Right lobe of liver (tissue), 6 donors: ENCODE measurements at regions of chr6 and their contacts with region 1.

Region 1: DNA sequence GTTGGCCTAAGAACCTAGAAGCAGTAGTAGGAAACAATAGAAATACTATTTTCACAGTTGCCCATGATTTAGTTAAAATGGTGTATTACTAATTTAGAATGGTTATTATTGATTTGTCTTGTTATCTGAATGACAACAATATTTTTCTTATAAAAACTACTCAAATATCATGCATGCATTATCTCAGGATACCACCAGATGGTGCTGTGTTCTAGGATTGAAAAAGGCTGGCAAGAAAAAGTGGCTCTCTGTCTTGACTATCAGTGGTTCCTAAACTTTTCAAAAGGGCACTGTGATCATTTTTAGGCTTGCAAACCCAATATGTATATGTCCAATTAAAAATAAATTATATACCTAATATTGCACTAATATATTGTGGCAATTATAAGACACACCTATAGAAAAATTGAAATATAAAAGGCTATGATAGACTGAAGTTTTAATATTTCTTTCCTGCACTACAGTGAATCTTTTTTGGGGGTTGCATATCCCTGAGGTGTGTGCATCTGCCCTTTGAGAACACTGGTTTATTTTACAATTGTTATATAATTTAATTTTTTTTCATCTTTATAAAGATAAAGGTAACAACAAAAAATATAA is 131.7 kb upstream of the MLIP start:
- DNase-seq: no peak
- ATAC-seq: peak; percentile 66 to 76 (median 73)
- H3K4me3 ChIP-seq: no peak overlapping the region
- H3K27ac ChIP-seq: no peak overlapping the region
- H3K4me1 ChIP-seq: no peaks in the 10 kb centered on the region
- H3K27me3 ChIP-seq: no peaks in the 10 kb centered on the region
- CTCF ChIP-seq: peak; percentile 74 to 93 (median 88)
- POLR2A ChIP-seq: no peak

Region 2: DNA sequence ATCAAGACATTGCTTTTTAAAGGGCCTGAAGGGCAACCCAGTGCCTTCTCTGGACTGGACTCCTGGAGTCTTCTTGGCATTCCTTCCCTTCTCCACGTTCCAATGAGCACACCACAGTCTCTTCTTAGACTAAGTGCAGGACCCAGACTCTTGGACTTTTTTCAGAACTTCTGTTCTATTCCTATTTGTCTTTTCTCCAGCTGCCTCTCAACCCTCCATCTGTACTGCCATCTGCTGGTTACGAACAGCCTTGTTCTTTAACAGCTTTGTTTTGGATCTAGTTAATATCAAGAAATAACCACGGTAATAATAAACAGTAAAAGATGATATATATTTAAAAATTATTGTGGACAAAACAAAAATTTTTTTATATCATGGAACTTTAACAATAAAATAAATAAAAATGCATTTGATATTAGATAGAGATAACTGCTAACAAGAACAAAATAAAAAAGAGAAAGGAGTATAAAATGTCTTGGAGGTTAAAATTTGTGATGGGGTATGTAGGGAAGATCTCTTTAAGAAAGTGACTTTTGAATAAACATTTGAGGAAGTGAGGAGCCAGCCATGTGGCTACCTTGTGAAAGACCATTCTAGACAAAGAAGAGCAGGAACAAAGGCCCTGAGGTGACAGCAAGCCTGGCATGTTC is 1089.7 kb after region 1 on chr6:
- intact Hi-C with region 1: loop called in 1 of 2 experiments (anchors 10 kb)
- DNase-seq: no peak
- ATAC-seq: peak; percentile 55 to 77 (median 66)
- H3K4me3 ChIP-seq: no peak overlapping the region
- H3K27ac ChIP-seq: no peak overlapping the region
- H3K4me1 ChIP-seq: no peaks in the 10 kb centered on the region
- H3K27me3 ChIP-seq: no peaks in the 10 kb centered on the region
- CTCF ChIP-seq: peak; percentile 58 to 65 (median 62)
- POLR2A ChIP-seq: no peak